ENCODE measurements at regions of chr10 and their contacts with region 1.

Region 1: DNA sequence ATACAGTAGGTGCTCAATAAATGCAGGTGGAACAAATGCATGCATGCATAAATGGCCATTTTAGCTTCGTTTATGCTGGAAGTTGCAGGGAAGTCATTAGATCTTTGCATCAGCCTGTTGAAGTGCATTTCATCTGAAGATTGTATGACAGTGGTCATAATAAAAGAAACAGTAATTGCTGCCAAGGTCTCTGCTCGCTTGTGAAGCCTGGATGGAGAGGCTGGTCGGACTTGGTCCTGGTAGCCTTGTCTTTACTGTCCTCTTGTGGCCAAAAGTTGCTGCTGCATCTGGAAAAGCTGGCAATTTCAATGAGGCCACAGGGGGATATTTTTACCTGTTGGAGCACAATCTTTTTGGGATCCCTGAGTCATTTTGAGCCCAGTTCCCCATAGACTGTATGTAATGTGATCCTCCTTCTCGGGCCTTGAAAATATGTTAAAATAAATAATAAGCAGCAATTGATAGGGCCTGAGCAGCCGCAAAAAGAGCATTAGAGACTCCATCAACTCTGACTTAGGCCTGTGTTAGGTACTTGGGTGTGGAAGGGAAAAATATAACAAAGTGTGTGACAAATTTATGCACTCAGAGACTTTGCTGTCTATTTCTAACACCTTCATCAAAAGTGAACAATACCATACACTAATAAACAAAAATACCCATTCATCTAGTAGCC is 31.6 kb upstream of the HABP2 start:
- DNase-seq: peak; percentile 64 to 77 (median 73)
- ATAC-seq: peak; percentile 73 to 79
- H3K4me3 ChIP-seq: no peak overlapping the region
- H3K27ac ChIP-seq: no peak overlapping the region
- H3K4me1 ChIP-seq: no peaks in the 10 kb centered on the region
- H3K27me3 ChIP-seq: no peaks in the 10 kb centered on the region

Region 2: DNA sequence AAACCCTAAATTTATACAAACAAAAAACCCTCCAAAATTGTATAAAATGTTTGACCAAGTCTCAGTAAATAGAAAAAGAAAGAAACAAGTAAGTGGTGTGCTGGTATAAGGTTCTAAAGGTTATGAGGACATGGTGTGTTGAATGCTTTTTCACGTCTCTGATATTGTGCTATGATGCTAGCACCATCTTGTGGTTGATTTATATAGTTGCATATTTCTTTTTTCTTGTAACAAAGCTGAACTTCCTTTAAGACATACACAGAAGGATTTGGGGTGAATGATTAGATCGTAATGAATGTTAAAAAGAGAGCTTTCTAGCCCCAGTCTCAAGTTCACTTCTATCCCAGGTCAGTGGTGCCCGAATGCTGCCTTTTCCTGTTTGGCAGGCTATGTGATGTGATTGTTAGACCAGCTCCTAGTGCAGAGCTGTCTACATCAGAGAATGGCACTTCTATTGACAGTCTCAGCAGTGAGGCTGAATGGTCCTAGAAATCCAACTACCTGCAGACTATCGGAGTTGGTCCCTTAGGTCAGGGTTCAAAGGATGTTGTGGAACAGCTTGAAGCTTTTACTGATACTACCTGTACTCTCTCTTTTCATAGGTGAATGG is 1049.3 kb before region 1 on chr10:
- intact Hi-C with region 1: loop called in 1 of 4 experiments (anchors 5 kb)
- DNase-seq: no peak
- ATAC-seq: peak; percentile 56 to 65
- H3K4me3 ChIP-seq: no peak overlapping the region
- H3K27ac ChIP-seq: no peak overlapping the region
- H3K4me1 ChIP-seq: no peaks in the 10 kb centered on the region
- H3K27me3 ChIP-seq: no peaks in the 10 kb centered on the region

Region 3: DNA sequence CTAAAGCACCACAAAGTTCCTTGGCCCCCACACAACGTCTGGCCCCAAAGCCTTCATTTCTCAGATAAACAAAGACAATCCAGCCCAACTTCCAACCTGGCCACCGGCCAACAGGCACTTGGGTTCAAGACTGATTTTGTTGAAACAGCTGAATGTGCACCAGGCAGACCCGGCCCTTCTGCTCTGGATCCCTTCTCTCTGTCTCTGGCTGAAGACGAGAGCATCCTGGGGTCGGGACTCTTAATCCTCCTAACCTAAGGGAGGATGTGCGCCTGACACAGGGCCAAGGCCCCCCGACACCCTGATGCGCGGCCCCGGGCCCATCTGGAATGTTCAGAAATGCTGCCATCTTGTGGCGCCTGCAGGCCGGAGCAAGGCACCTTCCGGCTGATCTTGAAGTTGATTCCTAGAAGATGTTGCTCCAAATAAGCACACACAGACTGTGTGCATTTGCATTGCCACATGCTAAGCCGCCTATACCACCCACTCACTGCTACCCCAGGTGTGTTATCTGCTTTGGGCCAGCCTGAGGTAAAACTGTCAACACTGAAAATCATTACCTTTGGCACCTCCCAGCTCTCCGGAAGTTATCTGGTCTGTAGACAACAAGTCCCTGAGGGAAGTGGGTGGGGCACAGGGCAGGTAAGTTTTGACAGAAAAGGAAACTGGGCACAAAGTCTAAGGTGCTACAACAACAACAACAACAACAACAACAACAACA is 66.8 kb before region 1 on chr10:
- intact Hi-C with region 1: loop called in 1 of 4 experiments (anchors 10 kb)
- DNase-seq: peak; percentile 44 to 83 (median 75)
- ATAC-seq: peak; percentile 58 to 66
- H3K4me3 ChIP-seq: no peak overlapping the region
- H3K27ac ChIP-seq: no peak overlapping the region
- H3K4me1 ChIP-seq: no peaks in the 10 kb centered on the region
- H3K27me3 ChIP-seq: no peaks in the 10 kb centered on the region

Region 4: GRCh38 chr10:113563306-113564088 is 42.2 kb after region 1 on chr10:
- intact Hi-C with region 1: loop called in 1 of 4 experiments (anchors 2 kb)
- DNase-seq: peak; percentile 74 to 92 (median 91)
- ATAC-seq: peak; percentile 88
- H3K4me3 ChIP-seq: peak overlapping the region; percentile 42
- H3K27ac ChIP-seq: no peak overlapping the region
- H3K4me1 ChIP-seq: peaks cover 2% of the 10 kb centered on the region
- H3K27me3 ChIP-seq: no peaks in the 10 kb centered on the region